ENCODE measurements at regions of chr13 and their contacts with region 1.

Region 1: GRCh38 chr13:21476893-21477472 is 17.9 kb upstream of the ZDHHC20 start:
- DNase-seq: peak; percentile 75 to 91 (median 84)
- ATAC-seq: peak; percentile 80 to 95 (median 92)
- H3K4me3 ChIP-seq: peak overlapping the region in 3 of 4 donors; percentile 7 to 43 (median 22)
- H3K27ac ChIP-seq: no peak overlapping the region
- H3K4me1 ChIP-seq: peaks cover 0 to 5% (median 0%) of the 10 kb centered on the region in 3 donors
- H3K27me3 ChIP-seq: no peaks in the 10 kb centered on the region
- CTCF ChIP-seq: peak; percentile 92 to 99 (median 96)

Region 2: DNA sequence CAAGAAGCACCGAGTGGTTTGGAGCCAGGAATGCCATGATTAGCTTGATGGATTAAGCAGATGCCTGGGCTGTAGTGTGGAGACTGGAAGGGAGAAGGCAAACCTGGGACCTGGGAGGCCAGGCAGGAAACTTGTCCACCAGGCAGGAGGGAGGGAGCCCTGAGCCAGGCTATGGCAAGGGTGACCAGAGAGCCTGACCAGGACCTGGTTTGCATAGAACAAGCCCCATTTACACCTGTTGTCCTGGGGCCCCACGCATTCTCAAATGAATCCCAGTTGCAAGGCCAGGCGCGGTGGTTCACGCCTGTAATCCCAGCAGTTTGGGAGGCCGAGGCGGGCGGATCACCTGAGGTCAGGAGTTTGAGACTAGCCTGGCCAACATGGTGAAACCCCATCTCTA is 365.4 kb before region 1 on chr13:
- intact Hi-C with region 1: loop called in 1 of 3 experiments (anchors 5 kb)
- DNase-seq: no peak
- ATAC-seq: no peak
- H3K4me3 ChIP-seq: no peak overlapping the region
- H3K27ac ChIP-seq: no peak overlapping the region
- H3K4me1 ChIP-seq: no peaks in the 10 kb centered on the region
- H3K27me3 ChIP-seq: no peaks in the 10 kb centered on the region
- CTCF ChIP-seq: no peak

Region 3: GRCh38 chr13:21297914-21298831 is 178.8 kb before region 1 on chr13:
- intact Hi-C with region 1: loop called in 1 of 3 experiments (anchors 10 kb)
- DNase-seq: peak; percentile 83 to 94 (median 89)
- ATAC-seq: peak; percentile 96 to 99 (median 99)
- H3K4me3 ChIP-seq: peak overlapping the region; percentile 57 to 92 (median 80)
- H3K27ac ChIP-seq: peak overlapping the region; percentile 30 to 71 (median 63)
- H3K4me1 ChIP-seq: peaks cover 0 to 12% (median 10%) of the 10 kb centered on the region in 3 donors
- H3K27me3 ChIP-seq: no peaks in the 10 kb centered on the region
- CTCF ChIP-seq: peak; percentile 76 to 83 (median 80)

Region 4: GRCh38 chr13:21696858-21697448 is 220.0 kb after region 1 on chr13:
- intact Hi-C with region 1: no loop called
- DNase-seq: no peak
- ATAC-seq: peak in 3 of 4 donors; percentile 58 to 64 (median 59)
- H3K4me3 ChIP-seq: no peak overlapping the region
- H3K27ac ChIP-seq: no peak overlapping the region
- H3K4me1 ChIP-seq: no peaks in the 10 kb centered on the region
- H3K27me3 ChIP-seq: no peaks in the 10 kb centered on the region
- CTCF ChIP-seq: no peak